ENCODE measurements at regions of chr16 and their contacts with region 1.

Region 1: GRCh38 chr16:47037746-47038458 is 64.4 kb upstream of the DNAJA2 start:
- DNase-seq: peak; percentile 82 to 88
- H3K4me3 ChIP-seq: peak overlapping the region in 2 of 3 donors; percentile 52 to 56
- H3K27ac ChIP-seq: peak overlapping the region in 1 of 3 donors; percentile 34
- H3K4me1 ChIP-seq: no peaks in the 10 kb centered on the region
- H3K27me3 ChIP-seq: no peaks in the 10 kb centered on the region
- CTCF ChIP-seq: peak; percentile 61 to 97 (median 89)
- POLR2A ChIP-seq: no peak

Region 2: GRCh38 chr16:48164907-48165726 is 1127.2 kb after region 1 on chr16:
- intact Hi-C with region 1: loop called (anchors 10 kb)
- DNase-seq: peak; percentile 64 to 65
- H3K4me3 ChIP-seq: no peak overlapping the region
- H3K27ac ChIP-seq: no peak overlapping the region
- H3K4me1 ChIP-seq: peaks cover 0 to 15% of the 10 kb centered on the region in 2 donors
- H3K27me3 ChIP-seq: no peaks in the 10 kb centered on the region
- CTCF ChIP-seq: peak; percentile 63 to 88 (median 76)
- POLR2A ChIP-seq: no peak

Measured in thyroid gland (tissue), 4 donors.